ENCODE measurements at regions of chr2 and their contacts with region 1.

Region 1: DNA sequence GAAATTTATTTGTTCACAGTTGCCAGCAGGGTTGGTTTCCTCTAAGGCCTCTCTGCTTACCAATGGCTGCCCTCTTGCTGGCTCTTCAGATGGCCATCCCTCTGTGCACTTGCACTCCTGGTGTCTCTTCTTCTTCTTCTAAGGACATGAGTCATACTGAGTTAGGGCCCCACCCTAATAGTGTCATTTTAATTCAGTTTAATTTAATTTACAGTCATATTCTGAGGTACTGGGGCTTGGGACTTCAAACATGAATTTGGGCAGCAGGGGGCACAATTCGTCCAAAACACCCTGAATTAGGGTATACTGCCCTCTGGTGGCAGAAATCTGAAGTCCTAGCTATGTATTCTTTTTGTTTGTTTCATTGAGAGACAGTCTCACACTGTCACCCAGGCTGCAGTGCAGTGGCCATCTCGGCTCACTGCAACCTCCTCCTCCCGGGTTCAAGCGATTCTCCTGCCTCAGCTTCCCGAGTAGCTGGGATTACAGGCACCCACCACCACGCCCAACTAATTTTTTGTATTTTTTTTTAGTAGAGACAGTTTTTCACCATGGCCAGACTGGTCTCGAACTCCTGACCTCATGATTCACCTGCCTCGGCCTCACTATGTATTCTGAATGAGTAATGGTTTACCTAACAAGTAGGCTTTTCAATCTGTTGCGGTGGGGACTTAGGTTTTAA is 19.8 kb downstream of the SLC4A1AP start:
- DNase-seq: peak; percentile 70

Region 2: DNA sequence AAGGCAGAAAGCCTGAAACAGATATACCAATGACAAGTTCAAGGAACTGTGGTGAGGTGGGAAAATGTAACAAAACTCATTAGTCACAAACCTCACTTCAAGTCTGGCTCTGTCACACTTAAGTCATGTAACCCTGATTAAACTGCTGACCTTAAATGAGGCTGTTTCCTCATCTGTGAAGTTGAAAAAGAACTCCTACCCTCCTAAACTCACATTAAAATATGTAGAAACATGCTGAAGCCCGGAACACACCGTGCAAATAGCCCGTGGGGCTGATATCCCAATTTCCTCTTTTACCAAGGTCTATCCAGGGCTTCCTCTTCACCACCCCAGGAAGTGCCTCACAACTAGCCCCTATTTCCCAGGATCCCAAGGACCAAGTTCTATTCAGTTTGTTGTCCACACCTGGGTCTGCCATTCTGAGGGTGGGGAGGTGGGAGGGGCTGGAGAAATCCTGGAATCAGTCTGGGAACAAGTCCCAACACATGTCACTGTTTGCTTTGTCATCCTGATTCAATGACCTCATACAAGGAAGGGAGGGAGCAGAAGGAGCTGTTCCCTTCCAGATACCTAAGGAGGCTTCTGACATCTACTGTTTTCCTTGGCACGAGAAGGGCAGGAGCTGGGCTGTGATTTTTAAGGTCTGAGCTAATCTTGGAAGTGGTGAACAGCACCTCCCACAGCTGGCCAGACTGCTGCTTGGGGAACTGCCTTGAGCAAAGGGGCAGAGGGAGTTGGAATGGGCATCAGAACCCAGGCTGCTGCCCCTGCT is 22.5 kb after region 1 on chr2:
- CTCF ChIA-PET with region 1: interaction called, 11 read pairs
- POLR2A ChIA-PET with region 1: no interaction called
- DNase-seq: no peak

Region 3: DNA sequence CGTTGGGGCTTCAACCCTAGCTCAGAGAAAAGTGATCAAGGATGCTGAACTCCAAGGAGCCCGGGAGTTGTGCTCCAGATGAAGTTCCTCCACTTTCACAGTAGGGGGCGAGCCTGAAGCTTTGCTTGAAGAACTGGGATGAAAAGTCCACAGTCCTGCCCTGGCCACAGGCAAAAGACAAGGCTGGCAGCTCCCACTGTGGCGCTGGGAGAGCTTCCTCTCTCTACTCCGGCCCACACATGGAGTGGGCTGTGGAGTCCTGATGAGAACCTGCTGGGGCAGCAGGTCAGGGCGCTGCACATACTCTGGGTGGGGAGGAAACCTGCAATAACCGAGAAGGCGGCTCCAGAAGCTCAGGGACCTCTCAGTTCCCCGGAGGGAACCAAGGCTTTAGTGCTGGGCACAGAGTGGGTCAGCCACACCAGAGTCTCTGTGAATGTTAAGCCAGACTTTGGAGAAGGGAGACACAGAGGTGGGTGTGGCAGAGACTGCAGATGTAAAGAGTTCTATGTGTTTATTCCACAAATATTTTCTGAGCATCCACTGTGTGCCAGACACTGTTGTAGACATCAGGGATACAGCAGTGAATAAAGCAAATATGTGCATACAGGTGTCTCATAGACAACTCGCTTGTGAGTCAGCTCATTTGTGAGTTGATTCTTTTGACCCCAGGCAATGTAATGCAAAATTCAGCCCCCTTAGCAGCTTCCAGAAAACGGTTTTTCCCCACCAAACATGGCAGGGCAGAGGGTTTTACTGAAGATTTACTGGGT is 40.0 kb after region 1 on chr2:
- CTCF ChIA-PET with region 1: interaction called, 10 read pairs
- POLR2A ChIA-PET with region 1: no interaction called
- DNase-seq: peak; percentile 79

Region 4: GRCh38 chr2:27754138-27754588 is 70.6 kb after region 1 on chr2:
- CTCF ChIA-PET with region 1: no interaction called
- POLR2A ChIA-PET with region 1: no interaction called
- DNase-seq: peak; percentile 80

Measured in HEK293T (cell line).